Caco-2 (cell line): ENCODE measurements at regions of chr5 and their contacts with region 1.

Region 1: DNA sequence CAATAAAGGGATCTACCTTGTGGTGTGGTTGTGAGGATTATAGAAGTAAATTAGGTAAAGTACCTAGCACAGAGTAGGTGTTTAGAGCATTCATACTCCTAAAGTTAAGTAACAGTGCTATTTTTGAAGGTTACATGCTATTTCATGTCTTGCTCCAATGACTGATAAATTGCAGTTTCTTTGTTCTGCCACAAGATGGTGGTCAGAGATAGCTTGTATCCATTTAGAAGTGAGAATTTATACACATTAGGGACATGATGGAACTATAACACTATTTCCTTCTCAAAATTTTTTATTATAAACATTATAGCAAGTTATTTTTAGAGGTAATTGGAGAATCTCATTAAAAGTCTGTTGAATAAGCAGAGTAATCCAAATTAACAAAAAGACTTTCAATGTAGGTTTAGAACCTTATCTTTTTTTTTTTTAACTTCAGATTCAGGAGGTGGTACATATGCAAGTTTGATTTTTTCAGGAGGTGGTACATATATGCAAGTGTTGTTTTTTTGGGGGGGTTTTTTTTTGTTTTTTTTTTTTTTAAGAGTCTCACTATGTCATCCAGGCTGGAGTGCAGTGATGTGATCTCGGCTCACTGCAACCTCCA is 17.1 kb downstream of the MTREX start:
- DNase-seq: peak in 1 of 2 experiments; percentile 32
- H3K4me3 ChIP-seq: no peak overlapping the region
- H3K4me3 Mint-ChIP-seq: no peak overlapping the region
- H3K27ac Mint-ChIP-seq: no peak overlapping the region
- H3K4me1 ChIP-seq: no peaks in the 10 kb centered on the region
- H3K4me1 Mint-ChIP-seq: no peaks in the 10 kb centered on the region
- H3K27me3 ChIP-seq: no peaks in the 10 kb centered on the region
- H3K27me3 Mint-ChIP-seq: no peaks in the 10 kb centered on the region
- CTCF ChIP-seq: peak; percentile 40 to 54

Region 2: GRCh38 chr5:55187370-55187769 is 137.5 kb before region 1 on chr5:
- CTCF ChIA-PET with region 1: interaction called, 3 read pairs
- POLR2A ChIA-PET with region 1: no interaction called
- intact Hi-C with region 1: loop called (anchors 1 kb)
- DNase-seq: peak in 1 of 2 experiments; percentile 25
- H3K4me3 ChIP-seq: no peak overlapping the region
- H3K4me3 Mint-ChIP-seq: no peak overlapping the region
- H3K27ac Mint-ChIP-seq: no peak overlapping the region
- H3K4me1 ChIP-seq: peaks cover 6% of the 10 kb centered on the region; the same call in 1 of the 2 replicates
- H3K4me1 Mint-ChIP-seq: peaks cover 6% of the 10 kb centered on the region
- H3K27me3 ChIP-seq: peaks cover 4% of the 10 kb centered on the region
- H3K27me3 Mint-ChIP-seq: peaks cover 23% of the 10 kb centered on the region
- CTCF ChIP-seq: peak; percentile 32 to 49

Region 3: GRCh38 chr5:55450050-55450765 is 125.3 kb after region 1 on chr5:
- CTCF ChIA-PET with region 1: no interaction called
- POLR2A ChIA-PET with region 1: no interaction called
- intact Hi-C with region 1: no loop called
- DNase-seq: no peak
- H3K4me3 ChIP-seq: no peak overlapping the region
- H3K4me3 Mint-ChIP-seq: no peak overlapping the region
- H3K27ac Mint-ChIP-seq: no peak overlapping the region
- H3K4me1 ChIP-seq: no peaks in the 10 kb centered on the region
- H3K4me1 Mint-ChIP-seq: no peaks in the 10 kb centered on the region
- H3K27me3 ChIP-seq: no peaks in the 10 kb centered on the region
- H3K27me3 Mint-ChIP-seq: no peaks in the 10 kb centered on the region
- CTCF ChIP-seq: no peak